ENCODE measurements at regions of chr9 and their contacts with region 1.

Region 1: DNA sequence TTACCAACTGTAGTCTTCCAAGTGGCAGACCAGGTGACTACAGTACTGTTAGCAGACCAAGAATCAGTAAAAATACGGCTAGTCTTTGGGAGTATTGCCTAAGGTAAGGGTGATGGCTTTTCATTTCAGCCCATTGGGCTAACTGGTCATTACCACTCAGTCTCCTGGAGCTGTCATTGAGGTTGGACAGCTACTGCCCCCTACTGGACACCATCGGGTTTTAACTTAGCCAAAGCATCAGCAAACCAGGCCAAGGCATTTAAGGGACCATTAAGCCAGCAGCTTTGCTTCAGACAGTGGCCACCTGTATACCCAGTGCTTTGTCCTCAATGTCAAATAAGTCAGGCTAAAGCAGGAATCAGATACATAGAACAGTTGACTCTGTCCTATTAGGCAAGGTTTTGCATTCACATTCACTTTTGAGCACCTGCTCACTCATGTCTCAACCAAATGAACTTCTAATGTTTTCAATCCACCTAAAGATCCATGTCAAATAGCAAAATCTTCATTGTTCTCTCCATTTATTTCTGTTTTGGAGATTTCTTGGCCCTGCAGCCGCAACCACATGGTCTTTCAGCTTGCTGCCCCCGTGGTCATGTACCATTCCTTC is 117.2 kb downstream of the INVS start:
- DNase-seq: peak; percentile 27 to 75 (median 56)
- ATAC-seq: peak; percentile 51
- H3K4me3 ChIP-seq: no peak overlapping the region
- H3K4me3 Mint-ChIP-seq: no peak overlapping the region
- H3K27ac ChIP-seq: no peak overlapping the region
- H3K27ac Mint-ChIP-seq: no peak overlapping the region
- H3K4me1 ChIP-seq: no peaks in the 10 kb centered on the region
- H3K4me1 Mint-ChIP-seq: no peaks in the 10 kb centered on the region
- H3K27me3 ChIP-seq: no peaks in the 10 kb centered on the region
- H3K27me3 Mint-ChIP-seq: no peaks in the 10 kb centered on the region
- CTCF ChIP-seq: peak; percentile 66

Region 2: GRCh38 chr9:100028201-100028784 is 188.0 kb before region 1 on chr9:
- CTCF ChIA-PET with region 1: no interaction called
- POLR2A ChIA-PET with region 1: no interaction called
- intact Hi-C with region 1: loop called (anchors 1 to 2 kb)
- DNase-seq: peak; percentile 47 to 75 (median 66)
- ATAC-seq: peak; percentile 97
- H3K4me3 ChIP-seq: no peak overlapping the region
- H3K4me3 Mint-ChIP-seq: no peak overlapping the region
- H3K27ac ChIP-seq: no peak overlapping the region
- H3K27ac Mint-ChIP-seq: no peak overlapping the region
- H3K4me1 ChIP-seq: no peaks in the 10 kb centered on the region
- H3K4me1 Mint-ChIP-seq: peaks cover 3% of the 10 kb centered on the region
- H3K27me3 ChIP-seq: no peaks in the 10 kb centered on the region
- H3K27me3 Mint-ChIP-seq: no peaks in the 10 kb centered on the region
- CTCF ChIP-seq: peak; percentile 73